GM13977 (cell line): ENCODE measurements at regions of chr6 and their contacts with region 1.

Region 1: DNA sequence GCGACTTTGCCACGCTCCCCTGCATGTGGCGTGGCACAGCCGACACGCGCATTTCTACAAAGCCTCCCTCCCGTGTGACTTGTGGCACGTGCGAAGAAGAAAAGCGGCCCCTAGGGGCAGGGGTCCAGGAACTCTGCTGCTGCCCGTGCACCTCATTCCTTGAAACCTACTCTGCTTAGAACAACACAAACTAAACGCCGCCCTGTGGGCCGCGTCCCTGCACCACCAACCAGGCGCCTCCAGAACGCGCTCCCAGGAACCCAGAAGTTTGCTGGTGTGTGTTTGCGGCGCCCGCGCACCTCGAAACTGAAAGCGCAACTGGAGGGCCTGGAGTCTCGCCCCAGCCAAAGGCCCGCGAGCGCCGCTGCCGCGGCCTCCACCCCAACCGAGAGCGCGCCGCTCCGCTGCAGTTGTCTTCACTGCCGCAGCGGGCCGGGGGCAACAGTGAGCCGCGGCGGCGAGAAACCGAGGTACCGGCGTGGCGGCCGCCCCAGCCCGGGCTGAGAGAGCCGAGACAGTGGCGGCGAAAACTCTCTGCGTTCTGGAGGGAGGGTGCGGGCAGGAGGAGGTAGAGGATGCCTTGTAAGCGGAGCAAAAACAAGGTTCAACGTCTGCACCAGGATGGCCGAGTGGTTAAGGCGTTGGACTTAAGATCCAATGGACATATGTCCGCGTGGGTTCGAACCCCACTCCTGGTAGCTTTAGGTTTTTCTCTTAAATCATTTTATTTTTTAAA is 65.8 kb downstream of the STX11 start:
- DNase-seq: peak; percentile 93
- CTCF ChIP-seq: peak; percentile 72

Region 2: GRCh38 chr6:143556529-143556928 is 659.6 kb before region 1 on chr6:
- in situ Hi-C with region 1: loop called (anchors 25 kb)
- DNase-seq: no peak
- CTCF ChIP-seq: no peak

Region 3: DNA sequence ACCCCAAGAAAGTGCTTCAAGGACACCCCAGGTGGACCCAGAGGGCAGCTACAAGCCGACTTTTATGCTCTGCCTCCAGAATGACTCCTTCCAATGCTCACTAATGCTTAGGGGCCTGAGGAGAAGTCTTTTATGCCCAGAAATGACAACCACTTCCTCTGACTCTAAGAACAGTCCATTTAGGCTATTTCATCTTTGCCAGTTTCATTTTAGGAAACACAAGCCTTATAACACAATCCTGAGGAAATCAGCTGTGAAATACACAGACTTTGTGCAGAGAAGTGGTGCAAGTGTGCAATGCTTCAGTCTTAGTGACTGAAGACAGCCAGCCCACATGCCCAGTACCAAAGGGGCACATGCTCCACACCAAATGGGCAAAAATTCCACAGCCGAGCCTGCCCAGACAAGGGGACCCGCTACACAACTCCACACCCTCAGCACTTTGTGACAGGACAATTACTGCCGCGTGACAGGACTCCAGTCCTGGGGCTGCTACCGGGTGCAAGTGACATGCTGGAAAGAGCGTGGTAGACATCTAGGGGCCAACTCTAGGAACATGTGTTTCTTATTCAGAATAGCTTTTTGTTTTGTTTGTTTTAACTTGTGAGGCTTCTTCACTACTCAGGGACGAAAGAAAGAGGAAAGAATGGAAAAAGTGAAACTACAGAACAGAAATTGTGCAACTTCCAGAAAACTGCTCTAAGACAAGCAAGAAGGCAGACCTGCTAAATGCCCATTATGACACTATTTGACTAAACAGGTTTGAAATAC is 179.9 kb before region 1 on chr6:
- in situ Hi-C with region 1: no loop called
- DNase-seq: no peak
- CTCF ChIP-seq: peak; percentile 19

Region 4: GRCh38 chr6:144095331-144096002 is 120.6 kb before region 1 on chr6 and contains the start of gene SF3B5:
- in situ Hi-C with region 1: loop called (anchors 10 kb)
- DNase-seq: peak; percentile 87
- CTCF ChIP-seq: no peak